T-cell (primary cell): ENCODE measurements at regions of chr17 and their contacts with region 1.

Region 1: GRCh38 chr17:78005452-78006171 is 47.1 kb downstream of the TNRC6C start:
- DNase-seq: no peak
- ATAC-seq: no peak
- H3K4me3 ChIP-seq: no peak overlapping the region
- H3K4me3 Mint-ChIP-seq: no peak overlapping the region
- H3K27ac ChIP-seq: no peak overlapping the region
- H3K27ac Mint-ChIP-seq: peak overlapping the region; percentile 34 to 57
- H3K4me1 ChIP-seq: peaks cover 3 to 5% of the 10 kb centered on the region in 2 experiments
- H3K4me1 Mint-ChIP-seq: peaks cover 50 to 54% (median 50%) of the 10 kb centered on the region in 3 donors
- H3K27me3 ChIP-seq: no peaks in the 10 kb centered on the region
- H3K27me3 Mint-ChIP-seq: no peaks in the 10 kb centered on the region

Region 2: GRCh38 chr17:77892469-77893143 is 113.0 kb before region 1 on chr17:
- CTCF ChIA-PET with region 1: no interaction called
- POLR2A ChIA-PET with region 1: no interaction called
- DNase-seq: peak in 2 of 35 experiments; percentile 11 to 38
- ATAC-seq: no peak
- H3K4me3 ChIP-seq: no peak overlapping the region
- H3K4me3 Mint-ChIP-seq: no peak overlapping the region
- H3K27ac ChIP-seq: no peak overlapping the region
- H3K27ac Mint-ChIP-seq: peak overlapping the region in 1 of 2 donors; percentile 12
- H3K4me1 ChIP-seq: peaks cover 6 to 37% of the 10 kb centered on the region in 2 experiments
- H3K4me1 Mint-ChIP-seq: peaks cover 26 to 36% (median 26%) of the 10 kb centered on the region in 3 donors
- H3K27me3 ChIP-seq: no peaks in the 10 kb centered on the region
- H3K27me3 Mint-ChIP-seq: no peaks in the 10 kb centered on the region

Region 3: DNA sequence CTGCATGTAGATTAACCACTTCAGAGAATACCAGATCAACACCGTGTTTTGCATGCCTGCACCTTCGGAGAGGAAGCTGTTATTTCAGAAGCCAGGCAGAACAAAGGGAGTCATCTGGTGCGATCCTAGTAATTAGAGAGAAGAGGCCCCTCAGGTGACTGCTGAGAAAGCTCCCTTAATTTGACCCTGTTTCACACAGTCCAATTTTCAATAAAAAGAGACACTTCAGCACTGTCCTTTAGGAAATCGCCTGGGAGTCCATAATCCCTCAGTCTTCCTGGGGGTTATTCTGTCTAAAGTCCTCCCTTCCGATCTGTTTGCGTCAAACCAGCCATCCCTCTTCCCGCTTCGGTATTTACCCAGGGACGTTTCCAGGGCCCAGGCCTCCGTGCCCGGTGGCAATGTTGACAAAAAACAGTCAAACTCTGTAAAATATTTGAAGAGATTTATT is 70.5 kb before region 1 on chr17:
- CTCF ChIA-PET with region 1: no interaction called
- POLR2A ChIA-PET with region 1: interaction called in 1 of 2 experiments, 10 read pairs
- DNase-seq: peak in 6 of 35 experiments; percentile 2 to 43 (median 18)
- ATAC-seq: peak in 3 of 4 experiments; percentile 43 to 77 (median 56)
- H3K4me3 ChIP-seq: peak overlapping the region in 1 of 2 donors; percentile 10
- H3K4me3 Mint-ChIP-seq: peak overlapping the region in 2 of 3 donors; percentile 13 to 23
- H3K27ac ChIP-seq: no peak overlapping the region
- H3K27ac Mint-ChIP-seq: peak overlapping the region in 1 of 2 donors; percentile 48
- H3K4me1 ChIP-seq: peaks cover 6 to 10% of the 10 kb centered on the region in 2 experiments
- H3K4me1 Mint-ChIP-seq: peaks cover 25 to 41% (median 27%) of the 10 kb centered on the region in 3 donors
- H3K27me3 ChIP-seq: peaks cover 0 to 12% of the 10 kb centered on the region in 2 experiments
- H3K27me3 Mint-ChIP-seq: peaks cover 0 to 8% of the 10 kb centered on the region in 2 donors

Region 4: DNA sequence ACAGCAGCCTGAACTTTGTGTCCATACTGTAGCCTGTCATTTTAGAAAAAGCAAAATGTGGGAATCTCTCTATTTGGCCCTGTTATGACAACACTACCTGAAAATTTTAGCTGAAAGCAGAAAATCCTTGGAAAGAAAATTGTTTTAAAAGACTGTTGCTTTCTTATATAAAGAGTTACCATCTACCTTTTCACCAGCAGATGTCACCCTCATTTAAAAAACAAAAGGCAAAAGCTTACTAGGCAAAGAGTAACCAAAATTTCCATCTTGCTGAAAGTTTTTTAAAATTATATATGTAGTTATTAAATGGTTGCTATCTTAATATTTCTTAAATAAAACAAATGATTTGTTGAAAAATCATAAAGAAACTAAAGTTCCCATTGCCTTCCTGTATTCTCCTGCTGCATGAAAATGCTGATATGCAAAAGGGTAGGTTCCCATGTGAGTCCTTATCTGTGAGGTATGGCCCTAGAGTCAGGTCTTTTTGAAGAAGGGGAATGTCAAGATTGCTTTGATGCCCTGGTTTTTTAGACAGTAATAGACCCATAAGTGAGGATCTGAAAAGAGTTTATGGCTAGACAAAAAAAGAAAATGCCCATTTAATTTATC is 13.9 kb after region 1 on chr17:
- CTCF ChIA-PET with region 1: interaction called, 6 to 13 read pairs
- POLR2A ChIA-PET with region 1: no interaction called
- DNase-seq: peak in 1 of 35 experiments; percentile 56
- ATAC-seq: no peak
- H3K4me3 ChIP-seq: no peak overlapping the region
- H3K4me3 Mint-ChIP-seq: no peak overlapping the region
- H3K27ac ChIP-seq: no peak overlapping the region
- H3K27ac Mint-ChIP-seq: peak overlapping the region in 1 of 2 donors; percentile 59
- H3K4me1 ChIP-seq: peaks cover 0 to 9% of the 10 kb centered on the region in 2 experiments
- H3K4me1 Mint-ChIP-seq: peaks cover 28 to 33% (median 30%) of the 10 kb centered on the region in 3 donors
- H3K27me3 ChIP-seq: no peaks in the 10 kb centered on the region
- H3K27me3 Mint-ChIP-seq: no peaks in the 10 kb centered on the region

Region 5: DNA sequence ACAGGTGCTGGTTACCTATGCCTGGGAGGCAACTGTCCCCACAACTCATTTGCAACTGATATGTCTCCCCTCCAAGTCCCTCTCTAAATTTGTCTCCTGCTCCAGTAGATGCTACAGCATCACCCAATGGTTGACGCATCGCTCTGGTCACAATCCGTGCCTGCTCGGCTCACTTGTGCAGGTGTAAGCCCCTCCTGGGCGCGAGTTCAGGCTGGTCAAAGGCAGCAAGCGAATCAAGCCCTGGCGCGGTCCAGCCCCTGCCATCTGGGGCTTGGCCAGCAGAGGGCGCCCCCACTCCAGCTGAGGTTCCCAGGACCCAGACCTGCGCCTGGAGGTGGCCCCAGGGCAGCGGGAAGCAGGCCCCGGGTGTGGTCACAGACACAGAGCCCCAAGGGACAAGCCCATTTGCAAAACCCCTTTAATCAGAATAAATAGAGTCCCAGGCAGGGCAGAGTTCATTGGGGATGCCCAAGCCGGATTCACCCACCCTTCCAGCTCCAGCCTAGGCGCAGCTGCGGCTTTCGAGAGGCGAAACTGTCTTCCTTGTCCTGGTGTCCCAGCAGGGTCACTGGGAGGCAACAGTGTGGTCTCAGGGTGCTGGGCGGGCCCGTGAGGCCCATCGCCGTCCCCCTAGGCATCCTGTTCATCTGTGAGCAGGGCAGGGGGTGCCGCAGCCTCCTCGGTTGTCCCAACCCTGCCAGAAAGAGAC is 107.1 kb after region 1 on chr17:
- CTCF ChIA-PET with region 1: no interaction called
- POLR2A ChIA-PET with region 1: no interaction called
- DNase-seq: peak in 29 of 35 experiments; percentile 53 to 84 (median 71)
- ATAC-seq: peak; percentile 65 to 70 (median 67)
- H3K4me3 ChIP-seq: no peak overlapping the region
- H3K4me3 Mint-ChIP-seq: peak overlapping the region in 2 of 3 donors; percentile 5 to 61
- H3K27ac ChIP-seq: peak overlapping the region; percentile 14
- H3K27ac Mint-ChIP-seq: peak overlapping the region; percentile 90 to 95
- H3K4me1 ChIP-seq: peaks cover 3 to 75% of the 10 kb centered on the region in 2 experiments
- H3K4me1 Mint-ChIP-seq: peaks cover 46 to 52% (median 49%) of the 10 kb centered on the region in 3 donors
- H3K27me3 ChIP-seq: no peaks in the 10 kb centered on the region
- H3K27me3 Mint-ChIP-seq: no peaks in the 10 kb centered on the region